ENCODE measurements at regions of chr7 and their contacts with region 1.

Region 1: GRCh38 chr7:97104719-97105238 is 12.7 kb upstream of the SDHAF3 start:
- DNase-seq: peak; percentile 67
- H3K4me3 ChIP-seq: no peak overlapping the region
- H3K27ac ChIP-seq: no peak overlapping the region
- H3K4me1 ChIP-seq: no peaks in the 10 kb centered on the region
- H3K27me3 ChIP-seq: no peaks in the 10 kb centered on the region
- CTCF ChIP-seq: peak; percentile 35 to 76 (median 69)
- POLR2A ChIP-seq: no peak

Region 2: GRCh38 chr7:97179454-97180104 is 74.8 kb after region 1 on chr7:
- intact Hi-C with region 1: loop called (anchors 10 kb)
- DNase-seq: peak; percentile 25
- H3K4me3 ChIP-seq: no peak overlapping the region
- H3K27ac ChIP-seq: no peak overlapping the region
- H3K4me1 ChIP-seq: no peaks in the 10 kb centered on the region
- H3K27me3 ChIP-seq: no peaks in the 10 kb centered on the region
- CTCF ChIP-seq: peak; percentile 26 to 79 (median 54)
- POLR2A ChIP-seq: no peak

Region 3: DNA sequence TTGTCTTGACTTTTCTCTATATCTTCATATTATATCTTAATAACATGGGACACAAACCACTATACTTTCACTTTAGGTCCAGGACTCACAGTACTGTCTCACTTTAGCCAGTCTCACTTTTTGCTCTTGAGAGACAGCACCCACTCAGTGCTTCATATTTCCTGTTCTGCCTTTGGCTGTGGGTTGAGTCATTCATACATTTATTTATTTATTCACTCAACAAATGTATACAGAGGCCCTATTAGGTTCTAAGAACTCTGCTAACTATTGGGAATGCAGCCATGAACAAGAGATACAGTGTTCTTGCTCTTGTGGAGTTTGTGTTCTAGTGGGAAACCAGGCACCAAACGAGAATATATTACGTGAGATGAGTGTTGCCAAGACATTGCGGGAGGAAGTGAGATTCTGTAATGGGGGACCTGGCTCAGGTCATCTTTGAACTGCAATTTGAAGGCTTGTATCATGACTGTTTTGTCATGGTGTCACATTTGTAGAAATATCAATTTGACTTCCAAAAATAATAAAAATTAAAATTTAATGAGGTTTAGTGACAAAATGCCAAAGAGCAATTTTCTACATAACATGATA is 202.8 kb after region 1 on chr7:
- intact Hi-C with region 1: no loop called
- DNase-seq: no peak
- H3K4me3 ChIP-seq: no peak overlapping the region
- H3K27ac ChIP-seq: no peak overlapping the region
- H3K4me1 ChIP-seq: no peaks in the 10 kb centered on the region
- H3K27me3 ChIP-seq: no peaks in the 10 kb centered on the region
- CTCF ChIP-seq: no peak
- POLR2A ChIP-seq: no peak

Region 4: GRCh38 chr7:97835296-97836138 is 730.7 kb after region 1 on chr7:
- intact Hi-C with region 1: loop called (anchors 2 kb)
- DNase-seq: peak; percentile 33
- H3K4me3 ChIP-seq: no peak overlapping the region
- H3K27ac ChIP-seq: no peak overlapping the region
- H3K4me1 ChIP-seq: no peaks in the 10 kb centered on the region
- H3K27me3 ChIP-seq: no peaks in the 10 kb centered on the region
- CTCF ChIP-seq: peak in 3 of 4 experiments; percentile 42 to 71 (median 49)
- POLR2A ChIP-seq: no peak

Measured in prostate gland (tissue), 2 donors.